Activated naive CD4-positive, alpha-beta T cell treated with anti-CD3 and anti-CD28 coated beads for 36 hours (primary cell): ENCODE measurements at regions of chr20 and their contacts with region 1.

Region 1: GRCh38 chr20:45812157-45813020 is at the start of gene UBE2C:
- DNase-seq: peak; percentile 98
- H3K4me3 Mint-ChIP-seq: peak within 1 kb of the TSS; percentile 94
- H3K27ac Mint-ChIP-seq: peak within 1 kb of the TSS; percentile 82
- H3K4me1 Mint-ChIP-seq: peaks cover 17% of the 10 kb centered on the region
- H3K27me3 Mint-ChIP-seq: no peaks in the 10 kb centered on the region
- total RNA-seq, gene UBE2C: 189 to 202 TPM

Region 2: DNA sequence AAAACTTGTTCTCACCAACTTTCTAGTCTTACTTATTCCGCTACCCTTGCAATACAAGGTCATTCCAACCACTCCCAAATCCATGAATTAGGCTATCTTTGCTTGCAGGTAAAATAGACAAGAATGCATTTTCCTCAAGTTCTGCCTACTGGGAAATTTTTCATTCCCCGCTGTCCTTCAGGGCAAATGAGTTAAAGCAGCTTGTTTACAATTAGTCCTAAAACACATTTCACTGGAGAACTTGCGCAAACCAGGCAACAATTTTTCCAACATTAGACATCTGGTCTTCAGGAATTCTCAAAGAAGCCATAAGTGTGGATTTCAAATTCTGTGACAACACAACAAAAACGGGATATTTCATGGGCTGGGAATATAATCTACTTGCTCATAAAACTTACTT is 69.8 kb before region 1 on chr20:
- CTCF ChIA-PET with region 1: no interaction called
- intact Hi-C with region 1: no loop called
- DNase-seq: no peak
- H3K4me3 Mint-ChIP-seq: no peak overlapping the region
- H3K27ac Mint-ChIP-seq: no peak overlapping the region
- H3K4me1 Mint-ChIP-seq: no peaks in the 10 kb centered on the region
- H3K27me3 Mint-ChIP-seq: peaks cover 11% of the 10 kb centered on the region

Region 3: GRCh38 chr20:45823949-45824835 is 11.8 kb after region 1 on chr20:
- CTCF ChIA-PET with region 1: interaction called, 11 read pairs
- intact Hi-C with region 1: no loop called
- DNase-seq: peak; percentile 69
- H3K4me3 Mint-ChIP-seq: peak overlapping the region; percentile 67
- H3K27ac Mint-ChIP-seq: no peak overlapping the region
- H3K4me1 Mint-ChIP-seq: peaks cover 13% of the 10 kb centered on the region
- H3K27me3 Mint-ChIP-seq: peaks cover 35% of the 10 kb centered on the region

Region 4: GRCh38 chr20:45880988-45881788 is 68.8 kb after region 1 on chr20 and contains the start of gene ZSWIM1:
- CTCF ChIA-PET with region 1: no interaction called
- intact Hi-C with region 1: loop called (anchors 1 kb)
- DNase-seq: peak; percentile 100
- H3K4me3 Mint-ChIP-seq: peak within 1 kb of the TSS; percentile 94
- H3K27ac Mint-ChIP-seq: peak within 1 kb of the TSS; percentile 93
- H3K4me1 Mint-ChIP-seq: peaks cover 48% of the 10 kb centered on the region
- H3K27me3 Mint-ChIP-seq: no peaks in the 10 kb centered on the region
- total RNA-seq, gene ZSWIM1: 8.2 to 8.4 TPM